ENCODE measurements at regions of chr3 and their contacts with region 1.

Region 1: DNA sequence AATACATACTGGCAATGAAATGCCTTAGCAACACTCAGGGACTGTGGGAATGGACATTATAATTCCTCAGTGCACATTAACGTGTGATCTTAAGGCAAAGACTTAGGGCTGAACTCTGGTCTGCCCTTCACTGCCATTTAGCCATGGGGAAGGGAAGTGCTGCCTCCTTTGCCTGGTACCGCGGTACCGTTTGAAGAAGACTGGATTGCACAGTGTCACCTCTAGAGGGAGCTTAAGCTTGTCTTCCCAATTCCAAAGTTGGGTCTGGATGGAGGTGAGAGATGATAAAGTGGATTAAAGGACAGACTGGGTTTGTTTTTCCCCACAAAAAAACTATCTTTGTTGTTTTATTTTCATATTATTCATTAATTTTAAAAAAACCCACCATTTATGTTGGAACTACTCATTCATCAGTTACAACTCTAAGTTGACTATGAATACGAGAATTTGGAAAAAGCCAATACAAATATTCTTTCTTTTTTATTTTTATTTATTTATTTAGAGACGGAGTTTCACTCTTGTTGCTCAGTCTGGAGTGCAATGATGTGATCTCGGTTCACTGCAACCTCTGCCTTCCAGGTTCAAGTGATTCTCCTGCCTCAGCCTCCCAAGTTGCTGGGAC is 60.0 kb upstream of the SYN2 start:
- H3K4me3 ChIP-seq: no peak overlapping the region
- H3K27ac ChIP-seq: no peak overlapping the region
- H3K4me1 ChIP-seq: no peaks in the 10 kb centered on the region
- CTCF ChIP-seq: peak; percentile 50; the same call in 1 of the 2 replicates

Region 2: GRCh38 chr3:11159421-11159904 is 784.7 kb before region 1 on chr3:
- CTCF ChIA-PET with region 1: no interaction called
- POLR2A ChIA-PET with region 1: no interaction called
- H3K4me3 ChIP-seq: no peak overlapping the region
- H3K27ac ChIP-seq: no peak overlapping the region
- H3K4me1 ChIP-seq: peaks cover 5% of the 10 kb centered on the region
- CTCF ChIP-seq: 0 out of 2 replicates have a peak, but pooled peaks have one; percentile 8

Region 3: GRCh38 chr3:11530153-11530721 is 413.9 kb before region 1 on chr3:
- CTCF ChIA-PET with region 1: no interaction called
- POLR2A ChIA-PET with region 1: no interaction called
- H3K4me3 ChIP-seq: no peak overlapping the region
- H3K27ac ChIP-seq: no peak overlapping the region
- H3K4me1 ChIP-seq: peaks cover 11% of the 10 kb centered on the region
- CTCF ChIP-seq: peak; percentile 40; the same call in 1 of the 2 replicates

Region 4: GRCh38 chr3:11954312-11954934 is 10.3 kb after region 1 on chr3:
- CTCF ChIA-PET with region 1: interaction called, 20 read pairs
- POLR2A ChIA-PET with region 1: no interaction called
- H3K4me3 ChIP-seq: no peak overlapping the region
- H3K27ac ChIP-seq: no peak overlapping the region
- H3K4me1 ChIP-seq: no peaks in the 10 kb centered on the region
- CTCF ChIP-seq: no peak

Measured in HEK293 (cell line).